HEK293T (cell line): ENCODE measurements at regions of chr7 and their contacts with region 1.

Region 1: GRCh38 chr7:100428199-100428966 is at the start of gene ZCWPW1:
- DNase-seq: peak; percentile 89

Region 2: DNA sequence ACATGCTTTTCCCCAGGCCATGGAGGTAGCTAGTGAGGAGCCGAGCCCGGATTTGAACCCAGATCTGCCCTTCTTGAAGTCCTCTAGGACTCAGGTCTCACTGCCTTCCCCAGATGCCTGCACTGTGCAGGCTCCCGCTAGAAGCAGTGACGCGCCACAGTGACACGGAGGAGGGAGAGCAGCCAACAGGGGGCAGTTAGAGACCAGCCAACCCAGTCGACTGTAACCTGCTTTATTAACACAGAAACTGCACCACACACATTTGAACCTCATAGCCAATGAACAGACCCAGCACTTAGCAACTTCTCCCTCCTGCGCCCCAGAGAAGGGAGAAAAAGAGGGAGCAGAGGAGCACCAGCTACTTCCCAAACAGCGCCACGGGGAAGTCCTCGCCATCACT is 27.7 kb before region 1 on chr7:
- CTCF ChIA-PET with region 1: no interaction called
- POLR2A ChIA-PET with region 1: interaction called, 20 read pairs
- DNase-seq: peak; percentile 61

Region 3: GRCh38 chr7:100444311-100445278 is 16.2 kb after region 1 on chr7:
- CTCF ChIA-PET with region 1: interaction called, 3 read pairs
- POLR2A ChIA-PET with region 1: interaction called, 43 read pairs
- DNase-seq: no peak

Region 4: DNA sequence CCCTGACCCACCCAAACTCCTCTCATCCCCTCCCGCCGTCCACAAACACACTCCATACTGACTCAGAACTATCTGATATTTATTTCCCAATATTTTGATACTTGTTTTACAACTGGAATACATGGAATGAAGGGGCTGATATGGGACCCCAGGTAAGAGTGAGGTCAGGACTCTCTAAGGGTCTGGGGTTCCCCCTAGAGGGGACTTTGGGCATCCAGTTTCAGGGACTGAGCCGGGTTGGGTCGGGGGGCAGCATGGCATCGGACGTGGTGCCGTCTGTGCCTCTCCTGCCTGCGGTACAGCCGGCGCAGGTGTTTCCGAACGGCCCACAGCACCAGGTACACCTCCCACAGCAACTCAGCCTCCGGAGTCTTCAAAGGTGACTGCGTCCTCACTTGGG is 28.2 kb after region 1 on chr7:
- CTCF ChIA-PET with region 1: no interaction called
- POLR2A ChIA-PET with region 1: interaction called, 10 read pairs
- DNase-seq: no peak